ENCODE measurements at regions of chr5 and their contacts with region 1.

Region 1: DNA sequence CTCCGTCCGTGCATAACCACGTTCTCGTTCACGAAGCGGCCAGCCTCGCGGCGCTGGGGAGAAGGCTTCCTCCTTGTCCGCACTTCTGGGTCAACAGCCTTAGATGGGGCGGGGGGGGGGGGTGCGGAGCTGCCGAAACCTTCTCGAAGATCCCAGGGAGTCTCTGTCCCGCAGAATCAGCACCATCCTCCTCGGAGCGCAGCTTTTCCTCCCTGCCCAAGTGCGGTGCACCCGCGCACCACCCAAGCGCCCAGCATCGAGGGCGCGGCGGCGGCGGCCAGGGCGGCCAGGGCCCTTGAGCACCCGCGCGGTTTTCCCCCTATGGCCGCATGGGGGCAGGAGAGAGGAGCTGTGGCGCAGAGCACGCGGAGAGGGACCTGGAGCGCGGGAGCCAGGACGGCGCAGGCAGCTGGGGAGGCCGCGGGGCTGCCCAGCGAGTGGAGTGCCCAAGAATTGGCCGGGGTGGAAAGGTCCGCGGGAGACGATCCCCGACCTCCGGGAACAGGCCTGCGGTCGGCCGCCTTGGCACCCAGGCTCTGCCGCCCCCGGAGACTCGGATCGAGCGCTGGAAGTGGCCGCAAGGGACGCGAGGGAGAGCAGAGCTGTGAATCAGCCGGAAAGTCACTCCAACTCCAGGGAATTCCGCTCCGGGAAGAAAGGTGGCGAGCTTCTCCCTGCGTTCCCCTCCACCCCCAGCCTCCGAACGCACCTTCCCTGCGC is 43.1 kb downstream of the TMEM174 start:
- DNase-seq: peak; percentile 91
- H3K4me3 Mint-ChIP-seq: peak overlapping the region; percentile 86
- H3K27ac Mint-ChIP-seq: no peak overlapping the region
- H3K4me1 Mint-ChIP-seq: peaks cover 9% of the 10 kb centered on the region
- H3K27me3 Mint-ChIP-seq: peaks cover 20% of the 10 kb centered on the region
- CTCF ChIP-seq: peak; percentile 90

Region 2: GRCh38 chr5:72955768-72956323 is 260.2 kb before region 1 on chr5 and contains the start of gene FCHO2:
- CTCF ChIA-PET with region 1: interaction called, 11 read pairs
- intact Hi-C with region 1: loop called (anchors 10 kb)
- DNase-seq: peak; percentile 100
- H3K4me3 Mint-ChIP-seq: peak within 1 kb of the TSS; percentile 93
- H3K27ac Mint-ChIP-seq: peak within 1 kb of the TSS; percentile 94
- H3K4me1 Mint-ChIP-seq: peaks cover 46% of the 10 kb centered on the region
- H3K27me3 Mint-ChIP-seq: no peaks in the 10 kb centered on the region
- CTCF ChIP-seq: peak; percentile 88
- total RNA-seq, gene FCHO2: 36.5 and 40.9 TPM in 2 replicates

Region 3: DNA sequence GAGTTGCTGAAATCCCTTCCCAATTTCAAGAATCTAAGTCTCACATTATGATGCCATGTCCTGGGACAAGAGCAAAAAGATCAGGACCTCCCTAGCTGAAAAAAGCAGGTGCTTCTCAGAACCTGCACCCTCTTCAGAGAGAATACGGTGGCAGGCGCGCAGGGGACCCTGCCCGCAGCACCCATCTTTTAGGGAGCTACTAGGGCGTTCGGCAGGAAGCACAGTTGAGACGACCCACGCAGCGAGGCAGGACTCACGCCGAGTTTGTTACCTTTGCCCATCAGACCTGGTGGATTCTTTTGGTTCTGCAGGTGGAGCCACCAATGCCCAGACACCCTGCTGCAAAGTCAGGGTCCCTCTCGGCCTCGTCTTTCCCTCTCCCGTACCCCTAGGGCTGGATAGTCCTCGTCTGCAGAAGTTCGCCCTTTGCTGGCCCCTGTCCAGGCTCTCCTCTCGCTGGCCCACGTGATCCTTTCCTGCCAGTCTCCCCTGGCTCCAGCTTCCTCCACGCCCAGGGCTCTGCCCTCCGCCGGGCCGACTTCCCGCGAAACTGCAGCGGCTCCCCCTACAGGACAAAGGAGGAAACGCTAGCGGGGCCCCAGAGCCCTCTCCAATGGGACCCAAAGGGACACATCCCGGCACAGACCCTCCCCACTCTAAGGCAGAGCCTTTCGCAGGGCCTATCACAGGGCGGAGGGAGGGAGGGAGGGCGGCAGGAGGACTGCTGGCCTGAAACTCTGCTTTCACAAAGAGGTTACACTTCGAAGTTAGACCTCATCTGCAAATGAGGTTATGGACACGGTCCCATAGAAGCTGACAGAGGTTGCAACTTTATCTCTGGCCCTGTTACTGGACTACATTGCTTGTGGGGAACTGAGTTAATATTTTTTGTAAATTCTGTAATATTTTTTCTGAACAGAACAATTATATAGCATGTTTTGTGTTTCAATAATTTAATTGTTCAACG is 14.2 kb before region 1 on chr5:
- CTCF ChIA-PET with region 1: interaction called, 24 read pairs
- intact Hi-C with region 1: no loop called
- DNase-seq: peak; percentile 98
- H3K4me3 Mint-ChIP-seq: peak overlapping the region; percentile 76
- H3K27ac Mint-ChIP-seq: peak overlapping the region; percentile 35
- H3K4me1 Mint-ChIP-seq: peaks cover 13% of the 10 kb centered on the region
- H3K27me3 Mint-ChIP-seq: peaks cover under 1% of the 10 kb centered on the region
- CTCF ChIP-seq: peak; percentile 92

Region 4: GRCh38 chr5:73448463-73449136 is 232.5 kb after region 1 on chr5 and contains the start of gene FOXD1:
- CTCF ChIA-PET with region 1: interaction called, 27 read pairs
- intact Hi-C with region 1: loop called (anchors 5 kb)
- DNase-seq: peak; percentile 89
- H3K4me3 Mint-ChIP-seq: peak within 1 kb of the TSS; percentile 83
- H3K27ac Mint-ChIP-seq: peak within 1 kb of the TSS; percentile 49
- H3K4me1 Mint-ChIP-seq: peaks cover 10% of the 10 kb centered on the region
- H3K27me3 Mint-ChIP-seq: peaks cover 40% of the 10 kb centered on the region
- CTCF ChIP-seq: no peak
- total RNA-seq, gene FOXD1: 6.4 and 7.8 TPM in 2 replicates

Measured in Calu3 (cell line).